ENCODE measurements at regions of chr17 and their contacts with region 1.

Region 1: GRCh38 chr17:29148790-29149430 is 31.3 kb downstream of the MYO18A start:
- DNase-seq: peak; percentile 94
- CTCF ChIP-seq: peak; percentile 94

Region 2: DNA sequence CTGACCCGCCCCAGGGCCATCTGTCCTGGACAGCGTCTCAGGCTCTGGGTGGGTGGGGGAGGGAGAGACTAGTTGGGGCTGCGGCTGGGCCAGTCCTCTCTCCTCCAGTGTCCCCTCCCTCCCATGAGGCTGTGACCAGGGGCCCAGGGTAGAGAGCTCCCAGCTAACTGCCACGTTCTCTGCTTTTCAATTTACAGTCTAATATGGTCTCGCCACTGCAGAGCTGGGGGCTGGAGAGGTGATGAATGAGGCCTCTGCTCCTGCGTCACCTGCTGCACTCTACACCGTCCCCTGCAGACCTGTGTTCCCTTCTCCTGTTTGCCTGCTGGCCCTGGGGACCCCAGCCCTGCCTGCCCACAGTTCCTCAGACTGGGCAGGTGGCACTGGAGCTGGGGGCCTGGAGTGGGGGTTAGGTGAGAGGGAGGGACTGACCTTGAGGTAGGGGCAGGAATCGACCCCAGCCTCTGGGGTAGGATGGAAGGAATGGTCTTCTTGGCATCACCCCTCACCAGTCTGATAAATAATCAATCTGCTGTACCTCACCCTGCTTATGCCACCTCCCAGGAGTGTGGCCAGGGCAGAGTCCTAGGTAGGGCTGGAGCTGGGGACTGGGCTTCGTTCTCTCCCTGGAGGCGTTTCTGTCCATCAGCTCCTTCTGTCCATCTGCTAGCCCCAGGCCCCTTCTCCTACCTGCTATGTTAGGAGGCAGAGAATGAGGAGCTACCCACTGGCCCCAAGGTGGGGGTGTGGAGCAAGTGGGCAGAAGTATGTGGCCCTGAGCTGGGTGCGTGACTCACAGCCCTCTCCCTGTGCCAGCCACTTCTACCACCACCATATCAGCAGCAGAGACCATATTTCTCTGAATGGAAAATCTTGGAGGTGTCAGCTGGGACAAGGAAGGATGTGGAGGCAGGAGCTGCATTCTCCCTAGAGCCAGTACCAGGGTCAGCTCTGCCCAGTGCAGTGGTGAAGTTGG is 156.0 kb before region 1 on chr17:
- CTCF ChIA-PET with region 1: no interaction called
- POLR2A ChIA-PET with region 1: no interaction called
- DNase-seq: no peak
- CTCF ChIP-seq: no peak

Region 3: GRCh38 chr17:29116804-29117772 is 31.8 kb before region 1 on chr17:
- CTCF ChIA-PET with region 1: interaction called, 27 read pairs
- POLR2A ChIA-PET with region 1: no interaction called
- DNase-seq: peak; percentile 83
- CTCF ChIP-seq: peak; percentile 98

Region 4: DNA sequence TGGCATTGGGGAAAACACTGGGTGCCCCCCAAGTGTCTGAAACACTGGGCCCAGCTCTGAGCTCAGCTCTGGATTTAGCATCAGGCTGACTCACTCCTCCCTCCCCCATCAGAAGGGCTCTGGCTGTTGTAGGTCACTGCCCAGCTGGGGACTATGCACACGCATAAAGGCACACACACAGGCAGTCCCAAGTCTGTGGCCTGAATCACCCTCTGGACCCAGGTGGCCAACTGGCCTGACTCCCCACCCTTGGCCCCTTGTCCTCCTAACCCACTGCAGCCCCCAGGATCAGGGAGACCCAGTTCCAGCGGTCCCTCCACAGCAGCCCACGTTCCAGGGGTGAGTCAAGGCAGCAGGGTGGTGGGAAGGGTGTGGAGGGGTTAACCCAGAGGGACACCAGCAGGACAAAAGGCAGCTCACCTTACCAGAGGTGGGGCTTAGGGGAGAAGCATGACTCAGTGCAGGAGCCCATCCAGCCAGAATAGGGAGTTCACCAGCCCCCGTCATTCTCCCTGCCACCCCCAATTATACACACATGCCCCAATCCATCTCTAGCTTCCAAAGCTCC is 15.7 kb before region 1 on chr17:
- CTCF ChIA-PET with region 1: interaction called, 40 read pairs
- POLR2A ChIA-PET with region 1: no interaction called
- DNase-seq: no peak
- CTCF ChIP-seq: no peak

Region 5: GRCh38 chr17:29180034-29180787 is 31.3 kb after region 1 on chr17 and contains the start of gene MYO18A:
- CTCF ChIA-PET with region 1: interaction called, 201 read pairs
- POLR2A ChIA-PET with region 1: interaction called, 7 read pairs
- DNase-seq: peak; percentile 94
- CTCF ChIP-seq: peak; percentile 89

Region 6: DNA sequence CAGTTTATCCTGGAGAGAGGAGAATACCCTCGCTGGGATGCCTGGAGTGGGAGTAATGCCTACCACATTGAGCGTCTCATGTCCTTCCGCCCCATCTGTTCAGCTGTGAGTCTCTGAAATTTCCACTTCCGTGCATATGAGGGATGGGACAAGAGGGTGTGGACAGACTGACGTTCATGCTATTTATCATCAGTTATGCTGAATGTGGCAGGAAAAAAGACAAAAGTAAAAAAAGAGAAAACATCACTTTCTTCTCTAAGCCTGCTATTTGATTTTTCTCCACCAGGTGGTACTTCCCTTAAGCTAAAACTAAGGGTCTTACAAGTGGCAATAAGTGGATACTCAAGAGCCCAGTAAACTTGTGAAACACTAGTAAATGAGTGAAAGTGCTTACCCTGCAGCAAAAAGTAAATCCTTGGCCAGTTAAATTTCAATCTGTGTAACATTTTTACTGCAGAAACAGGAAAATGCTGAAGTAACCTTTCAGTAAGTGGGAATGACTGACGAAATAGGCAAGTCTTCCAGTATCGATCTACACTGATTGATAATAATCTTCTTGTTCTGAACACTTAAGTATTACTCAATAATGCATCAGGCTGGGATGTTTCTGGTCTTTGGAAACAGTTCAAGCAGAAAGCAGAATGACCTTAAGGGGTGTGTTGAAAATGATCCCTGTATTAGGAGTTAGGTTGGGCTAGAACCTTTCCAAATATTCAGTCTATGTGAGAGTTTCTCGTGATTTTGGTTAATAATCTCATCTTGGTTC is 103.4 kb after region 1 on chr17:
- CTCF ChIA-PET with region 1: interaction called, 11 read pairs
- POLR2A ChIA-PET with region 1: no interaction called
- DNase-seq: no peak
- CTCF ChIP-seq: peak; percentile 13

Region 7: GRCh38 chr17:29369831-29370735 is 221.2 kb after region 1 on chr17:
- CTCF ChIA-PET with region 1: interaction called, 14 read pairs
- POLR2A ChIA-PET with region 1: no interaction called
- DNase-seq: peak; percentile 73
- CTCF ChIP-seq: peak; percentile 77

Measured in GM10248 (cell line).